HEK293T (cell line): ENCODE measurements at regions of chr11 and their contacts with region 1.

Region 1: DNA sequence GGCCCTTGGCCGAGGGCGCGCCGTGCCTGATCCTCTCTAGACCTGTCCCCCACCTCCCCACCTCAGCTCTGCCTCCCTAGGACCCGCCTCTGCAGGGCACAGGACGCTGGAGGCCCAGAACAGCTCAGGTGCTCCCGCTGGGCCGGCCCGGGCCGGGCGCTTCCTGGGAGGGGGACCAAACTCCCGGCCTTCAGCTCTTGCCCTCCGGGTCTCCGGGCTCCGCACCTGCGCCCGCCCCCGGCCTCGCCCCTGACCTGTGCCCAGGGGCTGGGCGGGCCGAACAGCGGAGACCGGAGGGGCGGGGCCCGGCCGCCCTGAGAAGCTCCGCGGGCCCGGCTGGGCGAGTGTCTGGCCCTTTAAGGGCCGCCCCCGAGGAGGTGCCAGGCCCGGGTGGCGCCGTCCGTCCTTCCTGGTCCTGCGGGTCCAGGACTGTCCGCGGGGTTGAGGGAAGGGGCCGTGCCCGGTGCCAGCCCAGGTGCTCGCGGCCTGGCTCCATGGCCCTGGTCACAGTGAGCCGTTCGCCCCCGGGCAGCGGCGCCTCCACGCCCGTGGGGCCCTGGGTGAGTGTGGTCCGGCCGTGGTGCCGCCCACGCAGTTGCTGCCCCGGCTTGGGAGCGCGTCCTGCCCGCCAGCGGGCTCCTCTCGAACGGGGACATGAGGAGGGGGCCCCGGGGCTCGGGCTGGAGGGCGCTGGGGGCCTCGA is at the start of gene SSH3:
- DNase-seq: peak; percentile 68

Region 2: GRCh38 chr11:67288452-67289225 is 14.6 kb before region 1 on chr11:
- CTCF ChIA-PET with region 1: interaction called, 3 read pairs
- POLR2A ChIA-PET with region 1: interaction called, 27 read pairs
- DNase-seq: peak; percentile 88

Region 3: DNA sequence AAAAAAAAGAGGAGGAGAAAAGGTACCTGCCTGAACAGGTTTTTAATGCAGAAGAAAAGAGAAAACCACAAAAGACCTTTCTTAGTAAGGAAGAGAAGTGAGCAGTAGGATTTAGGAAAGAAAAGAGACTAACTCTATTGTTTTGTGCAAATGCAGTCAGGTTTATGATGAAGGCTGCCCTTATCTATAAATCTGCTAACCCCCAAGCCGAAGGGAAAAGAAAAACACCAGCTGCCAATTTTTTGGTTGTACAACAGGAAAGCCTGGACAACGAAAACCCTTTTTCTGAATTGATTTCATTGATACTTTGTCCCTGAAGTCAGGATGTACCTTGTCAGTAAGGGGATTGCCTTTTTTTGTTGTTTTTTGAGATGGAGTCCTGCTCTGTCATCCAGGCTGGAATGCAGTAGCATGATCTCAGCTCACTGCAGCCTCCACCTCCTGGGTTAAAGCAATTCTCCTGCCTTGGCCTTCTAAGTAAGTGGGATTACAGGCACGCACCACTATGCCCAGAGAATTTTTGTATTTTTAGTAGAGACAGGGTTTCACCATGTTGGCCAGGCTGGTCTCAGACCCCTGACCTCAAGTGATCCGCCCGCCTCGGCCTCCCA is 28.9 kb after region 1 on chr11:
- CTCF ChIA-PET with region 1: no interaction called
- POLR2A ChIA-PET with region 1: no interaction called
- DNase-seq: no peak